ENCODE measurements at regions of chr1 and their contacts with region 1.

Region 1: DNA sequence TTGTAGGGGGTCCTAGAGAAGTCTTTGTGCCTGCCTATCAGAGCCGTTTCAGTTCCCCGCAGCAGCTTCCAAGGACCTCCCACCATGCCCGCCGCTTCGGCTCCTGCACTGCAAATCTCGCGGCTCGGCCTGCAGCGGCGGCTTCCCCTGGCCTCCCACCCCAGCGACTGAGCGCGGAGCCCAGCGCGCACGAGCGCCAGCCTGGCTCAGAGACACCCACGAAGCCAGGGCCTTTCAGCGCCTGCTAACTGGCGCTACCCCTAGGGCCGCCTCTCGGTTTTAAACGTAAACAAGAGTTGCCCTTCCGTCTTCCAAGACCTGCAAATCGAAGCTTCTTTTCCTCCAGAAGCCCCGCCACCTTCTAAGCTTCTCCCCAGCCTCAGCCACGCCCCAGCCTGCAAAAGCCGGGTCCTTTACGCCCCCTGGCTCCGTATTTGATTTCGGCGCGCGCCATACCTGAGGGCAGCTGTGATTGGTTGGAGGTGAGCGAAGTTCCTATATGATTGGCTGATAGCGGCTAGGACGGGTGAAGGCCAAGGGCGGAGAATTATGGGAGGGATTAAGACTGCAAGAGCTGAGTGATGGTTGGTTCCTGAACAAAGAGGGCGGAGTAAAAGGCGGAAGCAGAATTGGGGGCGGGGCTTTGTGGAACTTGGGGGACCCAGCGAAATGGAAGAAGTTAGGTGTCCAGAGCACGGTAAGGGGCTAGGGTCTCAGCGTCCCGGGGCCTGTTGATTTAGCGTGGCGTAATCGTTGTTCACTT is at the start of gene TTF2:
- DNase-seq: peak in 1 of 2 donors; percentile 98
- H3K4me3 ChIP-seq: peak within 1 kb of the TSS; percentile 62 to 73
- H3K27ac ChIP-seq: peak within 1 kb of the TSS; percentile 68
- H3K4me1 ChIP-seq: peaks cover 19% of the 10 kb centered on the region
- H3K27me3 ChIP-seq: no peaks in the 10 kb centered on the region
- CTCF ChIP-seq: no peak
- POLR2A ChIP-seq: no peak
- total RNA-seq, gene TTF2: 7.6 TPM

Region 2: GRCh38 chr1:116909510-116910378 is 150.1 kb before region 1 on chr1 and contains the start of gene PTGFRN:
- intact Hi-C with region 1: no loop called
- DNase-seq: peak; percentile 79 to 88
- H3K4me3 ChIP-seq: peak within 1 kb of the TSS; percentile 61 to 66
- H3K27ac ChIP-seq: peak within 1 kb of the TSS; percentile 84
- H3K4me1 ChIP-seq: peaks cover 37% of the 10 kb centered on the region
- H3K27me3 ChIP-seq: no peaks in the 10 kb centered on the region
- CTCF ChIP-seq: no peak
- POLR2A ChIP-seq: peak in 1 of 2 donors; percentile 38
- total RNA-seq, gene PTGFRN: 52.8 TPM

Region 3: GRCh38 chr1:117026361-117026760 is 33.5 kb before region 1 on chr1:
- intact Hi-C with region 1: no loop called
- DNase-seq: no peak
- H3K4me3 ChIP-seq: no peak overlapping the region
- H3K27ac ChIP-seq: no peak overlapping the region
- H3K4me1 ChIP-seq: no peaks in the 10 kb centered on the region
- H3K27me3 ChIP-seq: no peaks in the 10 kb centered on the region
- CTCF ChIP-seq: no peak
- POLR2A ChIP-seq: no peak

Region 4: DNA sequence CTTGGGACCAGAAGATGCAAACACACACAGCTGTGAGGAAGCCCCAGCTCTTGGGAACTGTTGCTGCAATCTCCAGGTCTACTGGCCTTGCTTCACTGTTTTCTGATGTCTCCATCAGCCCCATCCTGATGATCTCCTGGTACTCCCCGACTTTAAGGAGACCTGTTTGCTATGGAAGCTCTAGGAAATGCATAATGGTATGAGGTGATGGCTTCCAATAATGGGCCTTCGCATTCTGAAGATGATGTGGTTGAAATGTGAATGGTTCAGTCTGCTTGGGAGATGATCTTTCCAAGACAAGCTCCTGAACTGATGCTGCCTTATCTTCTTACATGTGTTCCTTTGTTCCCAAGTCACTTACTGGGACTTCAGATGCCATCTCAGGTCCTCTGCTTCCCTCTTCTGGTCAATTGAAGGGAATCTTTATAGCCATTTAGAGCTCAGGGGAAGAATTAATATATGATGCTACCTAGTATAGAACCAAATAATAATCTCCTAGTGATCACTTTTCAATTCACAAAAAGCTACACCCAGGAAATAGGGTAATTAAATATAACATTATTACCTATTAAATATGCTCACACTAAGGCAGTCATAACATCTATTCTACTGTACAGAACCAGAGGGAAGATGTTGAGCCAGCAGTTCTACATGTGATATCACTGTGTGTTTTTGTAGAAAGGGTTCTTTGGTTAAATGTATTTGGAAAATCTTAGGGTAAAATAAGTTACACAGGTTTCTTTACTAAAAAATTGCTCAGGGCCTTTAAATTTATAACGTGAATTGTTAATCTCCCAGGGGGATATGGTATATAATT is 224.7 kb after region 1 on chr1:
- intact Hi-C with region 1: loop called (anchors 10 kb)
- DNase-seq: no peak
- H3K4me3 ChIP-seq: no peak overlapping the region
- H3K27ac ChIP-seq: no peak overlapping the region
- H3K4me1 ChIP-seq: no peaks in the 10 kb centered on the region
- H3K27me3 ChIP-seq: no peaks in the 10 kb centered on the region
- CTCF ChIP-seq: peak; percentile 20 to 39 (median 28)
- POLR2A ChIP-seq: no peak

Measured in vagina (tissue), 2 donors.